PC-9 (cell line): ENCODE measurements at regions of chr3 and their contacts with region 1.

Region 1: DNA sequence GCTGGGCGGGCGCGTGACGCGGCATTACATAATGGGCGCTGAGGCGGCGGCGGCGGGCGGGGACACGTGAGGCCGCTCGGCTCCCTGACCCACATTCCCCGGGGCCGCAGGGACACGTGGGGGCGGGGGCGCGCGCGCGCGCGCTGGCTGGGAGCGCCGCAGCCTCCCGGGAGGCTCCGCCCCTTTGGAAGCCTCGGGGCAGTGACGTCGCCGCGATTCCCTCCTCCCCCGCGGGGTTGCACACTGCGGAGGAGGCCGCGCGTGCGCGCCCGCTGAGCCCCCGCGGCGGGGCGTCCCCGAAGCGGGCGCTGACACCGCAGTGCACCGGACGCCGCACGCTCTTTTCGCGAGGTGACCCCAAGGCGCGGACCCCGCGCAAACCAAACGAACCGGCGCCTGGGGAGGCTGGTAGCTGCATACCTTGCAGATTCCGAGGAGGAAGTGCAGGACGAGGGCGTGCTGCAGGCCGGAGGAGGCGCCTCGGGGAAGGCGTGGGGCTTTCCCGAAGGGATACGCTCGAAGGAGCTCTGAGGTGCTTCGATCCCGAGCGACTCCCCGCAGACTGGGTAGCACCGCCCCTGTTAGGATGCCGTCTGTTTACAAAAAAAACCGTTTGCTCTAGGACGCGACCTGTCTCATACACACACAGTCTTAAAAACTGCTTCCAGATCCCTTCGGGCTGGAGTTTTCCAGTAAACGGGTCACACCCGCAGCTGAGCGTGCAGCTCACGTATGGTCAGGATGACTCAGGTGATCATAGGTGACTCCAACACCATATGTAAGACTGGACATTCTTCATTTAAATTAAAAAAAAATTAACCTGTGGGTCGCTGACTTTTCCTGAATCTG is 1.0 kb downstream of the NR1D2 start:
- DNase-seq: peak; percentile 73 to 97
- H3K4me3 ChIP-seq: peak overlapping the region; percentile 70
- H3K27ac ChIP-seq: peak overlapping the region; percentile 94
- H3K4me1 ChIP-seq: peaks cover 27% of the 10 kb centered on the region
- H3K27me3 ChIP-seq: no peaks in the 10 kb centered on the region
- CTCF ChIP-seq: no peak

Region 2: DNA sequence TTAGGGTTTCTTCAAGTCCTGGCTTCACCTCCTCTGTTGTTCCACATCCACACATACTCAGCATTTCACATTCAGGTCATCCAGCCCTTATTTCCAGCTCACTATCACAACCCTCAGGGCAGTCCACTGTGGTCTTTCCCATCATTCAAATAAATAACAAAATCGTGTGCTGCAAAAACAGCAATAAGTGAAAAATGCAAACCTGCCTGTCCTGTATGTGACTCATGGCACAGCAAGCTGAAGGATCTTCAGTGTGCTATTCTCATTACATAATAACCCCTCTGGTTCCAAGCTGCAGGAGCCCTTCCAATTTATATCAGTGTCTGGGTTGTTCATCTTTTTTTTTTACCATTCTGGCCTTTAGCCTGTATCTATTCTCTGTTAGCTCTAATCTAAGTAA is 928.3 kb before region 1 on chr3:
- CTCF ChIA-PET with region 1: no interaction called
- POLR2A ChIA-PET with region 1: no interaction called
- intact Hi-C with region 1: loop called (anchors 10 kb)
- DNase-seq: peak; percentile 68 to 92
- H3K4me3 ChIP-seq: no peak overlapping the region
- H3K27ac ChIP-seq: no peak overlapping the region
- H3K4me1 ChIP-seq: peaks cover 42% of the 10 kb centered on the region
- H3K27me3 ChIP-seq: no peaks in the 10 kb centered on the region
- CTCF ChIP-seq: no peak

Region 3: GRCh38 chr3:23740517-23740965 is 205.6 kb before region 1 on chr3:
- CTCF ChIA-PET with region 1: no interaction called
- POLR2A ChIA-PET with region 1: no interaction called
- intact Hi-C with region 1: loop called (anchors 1 kb)
- DNase-seq: peak; percentile 72 to 91
- H3K4me3 ChIP-seq: peak overlapping the region; percentile 54
- H3K27ac ChIP-seq: peak overlapping the region; percentile 100
- H3K4me1 ChIP-seq: peaks cover 74% of the 10 kb centered on the region
- H3K27me3 ChIP-seq: no peaks in the 10 kb centered on the region
- CTCF ChIP-seq: no peak

Region 4: DNA sequence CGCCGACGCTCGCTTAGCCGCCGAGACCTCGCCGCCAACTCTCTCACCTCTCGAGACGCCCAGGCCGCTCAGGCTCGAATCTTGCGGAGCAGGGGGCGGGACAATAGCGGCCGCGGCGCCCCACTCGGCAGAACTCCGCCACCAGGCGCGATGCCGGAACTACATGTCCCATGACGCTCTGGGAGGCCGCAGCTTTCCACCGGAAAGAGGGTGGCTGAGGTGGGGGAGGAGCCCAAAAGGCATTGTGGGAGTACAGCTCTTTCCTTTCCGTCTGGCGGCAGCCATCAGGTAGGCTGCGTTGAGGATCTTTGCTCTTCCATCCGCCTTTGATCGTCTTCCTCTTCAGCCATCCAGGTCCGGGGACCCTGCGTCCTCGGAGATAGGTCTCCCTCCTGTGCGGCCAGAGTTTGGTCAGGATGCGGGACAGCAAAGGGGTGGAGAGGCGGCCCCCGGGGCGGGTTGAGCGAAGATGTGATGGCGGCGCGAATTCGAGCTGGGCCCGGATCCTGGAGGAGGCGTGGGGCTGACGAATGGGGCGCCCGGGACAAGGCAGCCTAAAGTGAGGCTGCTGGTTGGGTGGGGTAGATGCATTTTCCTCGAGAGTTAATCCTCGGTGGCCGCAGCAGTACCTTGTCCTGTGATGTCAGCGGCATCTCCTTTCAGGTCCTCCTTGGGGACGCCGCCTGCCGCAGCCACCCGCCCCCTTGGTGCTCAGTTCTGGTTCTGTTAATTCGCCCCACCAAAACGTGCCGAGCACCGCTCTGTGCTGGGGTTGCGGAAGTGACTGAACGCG is 29.0 kb before region 1 on chr3 and contains the starts of genes NKIRAS1 and RPL15:
- CTCF ChIA-PET with region 1: no interaction called
- POLR2A ChIA-PET with region 1: interaction called, 9 read pairs
- intact Hi-C with region 1: loop called (anchors 1 kb)
- DNase-seq: peak; percentile 84 to 95
- H3K4me3 ChIP-seq: peak within 1 kb of the TSS; percentile 91
- H3K27ac ChIP-seq: peak within 1 kb of the TSS; percentile 84
- H3K4me1 ChIP-seq: peaks cover 52% of the 10 kb centered on the region
- H3K27me3 ChIP-seq: no peaks in the 10 kb centered on the region
- CTCF ChIP-seq: peak; percentile 61
- total RNA-seq, gene NKIRAS1: 8.6 and 12.6 TPM in 2 replicates
- total RNA-seq, gene RPL15: 1,784 and 1,876 TPM in 2 replicates

Region 5: GRCh38 chr3:23959135-23959900 is 13.2 kb after region 1 on chr3:
- CTCF ChIA-PET with region 1: no interaction called
- POLR2A ChIA-PET with region 1: interaction called, 3 read pairs
- intact Hi-C with region 1: loop called (anchors 1 kb)
- DNase-seq: peak; percentile 65 to 97
- H3K4me3 ChIP-seq: no peak overlapping the region
- H3K27ac ChIP-seq: peak overlapping the region; percentile 94
- H3K4me1 ChIP-seq: peaks cover 49% of the 10 kb centered on the region
- H3K27me3 ChIP-seq: no peaks in the 10 kb centered on the region
- CTCF ChIP-seq: no peak

Region 6: DNA sequence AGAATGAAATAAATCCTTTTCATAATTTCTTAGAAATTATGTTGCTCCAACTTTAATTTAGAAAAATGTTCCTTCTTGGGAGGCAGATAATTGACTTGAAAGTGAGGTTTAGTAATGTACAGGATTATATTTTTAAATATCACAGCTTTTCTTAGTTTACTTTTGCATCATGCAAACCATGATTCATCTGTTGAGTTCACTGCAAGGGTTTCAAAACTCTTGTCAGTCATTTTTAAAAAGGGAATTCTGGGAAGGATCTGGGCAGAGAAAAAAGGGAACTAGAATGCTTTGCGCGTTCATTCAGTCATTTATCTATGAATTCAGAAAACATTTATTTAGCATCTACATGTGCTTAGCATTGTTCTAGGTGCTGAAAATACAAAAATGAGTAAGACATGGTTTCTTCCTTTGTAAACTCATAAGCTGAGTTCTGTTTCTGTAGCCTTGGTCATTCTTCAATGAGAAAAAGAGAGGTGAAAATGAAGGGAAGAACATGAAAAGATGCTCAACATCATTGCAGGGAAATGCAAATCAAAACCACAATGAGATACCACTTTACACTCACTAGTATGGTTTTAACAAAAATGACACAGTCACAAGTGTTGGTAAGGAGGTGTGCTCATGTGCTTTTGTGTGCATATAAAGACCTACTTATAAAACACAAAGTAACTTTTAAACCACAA is 208.0 kb after region 1 on chr3:
- CTCF ChIA-PET with region 1: no interaction called
- POLR2A ChIA-PET with region 1: interaction called, 3 read pairs
- intact Hi-C with region 1: loop called (anchors 2 kb)
- DNase-seq: no peak
- H3K4me3 ChIP-seq: no peak overlapping the region
- H3K27ac ChIP-seq: peak overlapping the region; percentile 27
- H3K4me1 ChIP-seq: peaks cover 64% of the 10 kb centered on the region
- H3K27me3 ChIP-seq: no peaks in the 10 kb centered on the region
- CTCF ChIP-seq: no peak